ENCODE measurements at regions of chr5 and their contacts with region 1.

Region 1: DNA sequence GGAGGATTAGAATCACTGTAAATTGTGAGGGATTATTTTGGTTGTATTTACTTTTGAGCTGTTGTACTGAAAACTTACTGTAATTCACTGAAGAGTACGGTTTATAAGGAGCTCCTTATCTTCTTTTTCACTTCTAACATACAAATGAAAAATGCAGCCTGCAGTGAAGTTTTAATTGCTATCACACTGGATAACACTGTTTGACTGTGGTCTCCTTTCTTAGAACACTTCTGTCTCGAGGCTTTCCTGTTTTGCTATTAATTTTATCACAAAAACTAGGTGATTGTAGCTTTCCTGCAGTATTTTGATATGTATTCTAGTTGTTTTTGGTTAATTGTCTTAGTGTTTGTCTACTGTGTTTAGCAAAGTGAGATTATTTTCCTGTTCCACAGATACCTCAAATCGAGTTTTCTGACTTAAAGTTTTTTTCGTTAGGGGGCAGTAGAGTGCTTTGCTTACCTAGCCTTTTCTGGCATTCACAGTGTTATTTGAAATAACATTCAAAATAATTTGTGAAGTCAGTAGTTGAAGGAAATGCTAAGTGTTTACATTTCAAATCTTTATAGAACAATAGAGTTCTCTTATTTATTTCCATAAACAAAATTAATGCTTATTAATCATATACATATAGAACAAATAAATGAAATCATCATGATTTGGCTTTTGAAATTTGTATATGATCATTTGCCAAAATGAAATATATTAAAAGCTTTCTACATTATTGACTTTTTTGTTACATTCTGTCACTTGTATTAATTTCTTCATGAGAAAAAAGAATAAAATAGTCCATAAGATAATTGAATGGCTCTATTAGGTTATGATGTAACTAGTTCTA is 52.9 kb downstream of the COMMD10 start:
- DNase-seq: peak; percentile 62
- ATAC-seq: no peak
- H3K4me3 ChIP-seq: no peak overlapping the region
- H3K4me3 Mint-ChIP-seq: no peak overlapping the region
- H3K27ac ChIP-seq: no peak overlapping the region
- H3K27ac Mint-ChIP-seq: no peak overlapping the region
- H3K4me1 ChIP-seq: peaks cover 0 to 7% of the 10 kb centered on the region in 2 donors
- H3K4me1 Mint-ChIP-seq: peaks cover 14% of the 10 kb centered on the region
- H3K27me3 ChIP-seq: no peaks in the 10 kb centered on the region
- H3K27me3 Mint-ChIP-seq: no peaks in the 10 kb centered on the region
- CTCF ChIP-seq: peak; percentile 95

Region 2: GRCh38 chr5:116076496-116076895 is 61.3 kb before region 1 on chr5:
- CTCF ChIA-PET with region 1: no interaction called
- POLR2A ChIA-PET with region 1: no interaction called
- intact Hi-C with region 1: loop called (anchors 5 kb)
- DNase-seq: peak; percentile 82
- ATAC-seq: peak; percentile 96
- H3K4me3 ChIP-seq: no peak overlapping the region
- H3K4me3 Mint-ChIP-seq: peak overlapping the region; percentile 44
- H3K27ac ChIP-seq: peak overlapping the region in 1 of 2 donors; percentile 43
- H3K27ac Mint-ChIP-seq: peak overlapping the region; percentile 12
- H3K4me1 ChIP-seq: peaks cover 24% of the 10 kb centered on the region in 2 donors
- H3K4me1 Mint-ChIP-seq: peaks cover 30% of the 10 kb centered on the region
- H3K27me3 ChIP-seq: no peaks in the 10 kb centered on the region
- H3K27me3 Mint-ChIP-seq: no peaks in the 10 kb centered on the region
- CTCF ChIP-seq: no peak

Region 3: DNA sequence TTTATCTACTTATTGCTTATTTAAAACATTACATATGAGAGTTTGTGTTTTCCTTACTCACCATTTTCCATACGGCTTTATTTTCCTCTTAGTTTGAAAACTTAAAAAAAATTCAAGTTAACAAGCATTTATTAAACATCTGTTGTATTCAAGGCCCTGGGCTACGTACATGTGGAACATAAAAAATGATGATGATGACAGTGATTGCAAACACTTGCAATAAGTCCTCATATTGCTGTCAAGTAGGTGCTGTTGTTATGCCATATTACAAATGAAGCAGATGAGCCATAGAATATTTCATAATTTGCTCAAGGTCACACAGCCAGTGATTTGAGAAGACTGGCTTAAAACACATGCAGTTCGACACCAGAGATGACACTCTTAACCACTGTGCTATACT is 127.7 kb after region 1 on chr5:
- CTCF ChIA-PET with region 1: no interaction called
- POLR2A ChIA-PET with region 1: no interaction called
- intact Hi-C with region 1: no loop called
- DNase-seq: no peak
- ATAC-seq: no peak
- H3K4me3 ChIP-seq: no peak overlapping the region
- H3K4me3 Mint-ChIP-seq: no peak overlapping the region
- H3K27ac ChIP-seq: no peak overlapping the region
- H3K27ac Mint-ChIP-seq: no peak overlapping the region
- H3K4me1 ChIP-seq: no peaks in the 10 kb centered on the region
- H3K4me1 Mint-ChIP-seq: no peaks in the 10 kb centered on the region
- H3K27me3 ChIP-seq: no peaks in the 10 kb centered on the region
- H3K27me3 Mint-ChIP-seq: no peaks in the 10 kb centered on the region
- CTCF ChIP-seq: no peak

Region 4: DNA sequence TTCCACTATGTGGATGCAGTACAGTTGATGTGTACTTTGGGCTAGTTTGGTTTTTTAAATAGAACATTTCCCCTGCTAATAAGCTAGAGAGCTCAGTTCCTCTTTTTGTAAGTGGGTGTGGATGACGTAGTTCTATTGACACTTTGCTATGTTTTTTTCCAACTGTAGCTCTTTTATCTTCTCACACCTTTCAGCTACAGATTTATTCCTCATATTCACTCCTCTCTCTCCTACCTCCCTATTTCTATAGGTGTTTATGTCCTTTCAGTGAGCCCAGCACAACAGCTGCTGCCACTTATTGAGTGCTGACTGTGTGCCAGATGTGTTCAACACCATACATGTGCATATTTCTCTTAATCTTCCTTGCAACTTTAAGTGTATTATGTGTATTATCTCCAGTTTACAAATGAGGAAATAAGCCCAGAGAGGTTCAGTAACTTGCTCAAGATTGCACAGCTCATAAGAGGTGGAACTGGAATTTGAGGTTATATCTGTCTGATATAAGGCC is 221.2 kb after region 1 on chr5:
- CTCF ChIA-PET with region 1: interaction called, 4 read pairs
- POLR2A ChIA-PET with region 1: no interaction called
- intact Hi-C with region 1: loop called (anchors 5 kb)
- DNase-seq: peak; percentile 64
- ATAC-seq: peak; percentile 86
- H3K4me3 ChIP-seq: no peak overlapping the region
- H3K4me3 Mint-ChIP-seq: peak overlapping the region; percentile 12
- H3K27ac ChIP-seq: peak overlapping the region; percentile 46 to 64
- H3K27ac Mint-ChIP-seq: peak overlapping the region; percentile 79
- H3K4me1 ChIP-seq: peaks cover 23 to 26% of the 10 kb centered on the region in 2 donors
- H3K4me1 Mint-ChIP-seq: peaks cover 30% of the 10 kb centered on the region
- H3K27me3 ChIP-seq: no peaks in the 10 kb centered on the region
- H3K27me3 Mint-ChIP-seq: no peaks in the 10 kb centered on the region
- CTCF ChIP-seq: no peak

Region 5: GRCh38 chr5:116947691-116948528 is 810.1 kb after region 1 on chr5:
- CTCF ChIA-PET with region 1: interaction called, 14 read pairs
- POLR2A ChIA-PET with region 1: no interaction called
- intact Hi-C with region 1: no loop called
- DNase-seq: peak; percentile 61
- ATAC-seq: peak; percentile 47
- H3K4me3 ChIP-seq: no peak overlapping the region
- H3K4me3 Mint-ChIP-seq: no peak overlapping the region
- H3K27ac ChIP-seq: no peak overlapping the region
- H3K27ac Mint-ChIP-seq: no peak overlapping the region
- H3K4me1 ChIP-seq: peaks cover 0 to 4% of the 10 kb centered on the region in 2 donors
- H3K4me1 Mint-ChIP-seq: no peaks in the 10 kb centered on the region
- H3K27me3 ChIP-seq: no peaks in the 10 kb centered on the region
- H3K27me3 Mint-ChIP-seq: no peaks in the 10 kb centered on the region
- CTCF ChIP-seq: peak; percentile 68

Region 6: GRCh38 chr5:117454716-117455596 is 1317.2 kb after region 1 on chr5:
- CTCF ChIA-PET with region 1: interaction called, 5 read pairs
- POLR2A ChIA-PET with region 1: no interaction called
- intact Hi-C with region 1: loop called (anchors 10 kb)
- DNase-seq: peak; percentile 63
- ATAC-seq: peak; percentile 79
- H3K4me3 ChIP-seq: peak overlapping the region in 3 of 5 experiments; percentile 6 to 29 (median 9)
- H3K4me3 Mint-ChIP-seq: peak overlapping the region; percentile 64
- H3K27ac ChIP-seq: no peak overlapping the region
- H3K27ac Mint-ChIP-seq: no peak overlapping the region
- H3K4me1 ChIP-seq: peaks cover 5 to 10% of the 10 kb centered on the region in 2 donors
- H3K4me1 Mint-ChIP-seq: peaks cover 7% of the 10 kb centered on the region
- H3K27me3 ChIP-seq: peaks cover 0 to 9% (median 4%) of the 10 kb centered on the region in 4 experiments
- H3K27me3 Mint-ChIP-seq: peaks cover 9% of the 10 kb centered on the region
- CTCF ChIP-seq: peak; percentile 93

Measured in B cell (primary cell).